Activated naive CD4-positive, alpha-beta T cell treated with anti-CD3 and anti-CD28 coated beads for 36 hours (primary cell): ENCODE measurements at regions of chr1 and their contacts with region 1.

Region 1: GRCh38 chr1:10283318-10283984 is 73.1 kb downstream of the KIF1B start:
- DNase-seq: peak; percentile 71
- H3K4me3 Mint-ChIP-seq: no peak overlapping the region
- H3K27ac Mint-ChIP-seq: peak overlapping the region; percentile 54
- H3K4me1 Mint-ChIP-seq: peaks cover 38% of the 10 kb centered on the region
- H3K27me3 Mint-ChIP-seq: no peaks in the 10 kb centered on the region

Region 2: GRCh38 chr1:9809100-9809510 is 474.3 kb before region 1 on chr1:
- CTCF ChIA-PET with region 1: no interaction called
- intact Hi-C with region 1: no loop called
- DNase-seq: no peak
- H3K4me3 Mint-ChIP-seq: no peak overlapping the region
- H3K27ac Mint-ChIP-seq: no peak overlapping the region
- H3K4me1 Mint-ChIP-seq: peaks cover 45% of the 10 kb centered on the region
- H3K27me3 Mint-ChIP-seq: no peaks in the 10 kb centered on the region

Region 3: GRCh38 chr1:10170239-10170574 is 113.2 kb before region 1 on chr1:
- CTCF ChIA-PET with region 1: interaction called, 3 read pairs
- intact Hi-C with region 1: loop called (anchors 1 kb)
- DNase-seq: peak; percentile 48
- H3K4me3 Mint-ChIP-seq: no peak overlapping the region
- H3K27ac Mint-ChIP-seq: peak overlapping the region; percentile 87
- H3K4me1 Mint-ChIP-seq: peaks cover 40% of the 10 kb centered on the region
- H3K27me3 Mint-ChIP-seq: no peaks in the 10 kb centered on the region

Region 4: GRCh38 chr1:10209905-10210810 is 73.3 kb before region 1 on chr1 and contains the start of gene KIF1B:
- CTCF ChIA-PET with region 1: interaction called, 13 read pairs
- intact Hi-C with region 1: loop called (anchors 1 kb)
- DNase-seq: peak; percentile 95
- H3K4me3 Mint-ChIP-seq: peak within 1 kb of the TSS; percentile 83
- H3K27ac Mint-ChIP-seq: peak within 1 kb of the TSS; percentile 69
- H3K4me1 Mint-ChIP-seq: peaks cover 29% of the 10 kb centered on the region
- H3K27me3 Mint-ChIP-seq: no peaks in the 10 kb centered on the region
- total RNA-seq, gene KIF1B: 6.1 to 6.2 TPM

Region 5: GRCh38 chr1:10232163-10232562 is 51.3 kb before region 1 on chr1:
- CTCF ChIA-PET with region 1: no interaction called
- intact Hi-C with region 1: loop called (anchors 5 kb)
- DNase-seq: no peak
- H3K4me3 Mint-ChIP-seq: no peak overlapping the region
- H3K27ac Mint-ChIP-seq: no peak overlapping the region
- H3K4me1 Mint-ChIP-seq: peaks cover 18% of the 10 kb centered on the region
- H3K27me3 Mint-ChIP-seq: no peaks in the 10 kb centered on the region

Region 6: GRCh38 chr1:10398734-10399623 is 115.5 kb after region 1 on chr1 and contains the start of gene PGD:
- CTCF ChIA-PET with region 1: no interaction called
- intact Hi-C with region 1: loop called (anchors 2 kb)
- DNase-seq: peak; percentile 98
- H3K4me3 Mint-ChIP-seq: peak within 1 kb of the TSS; percentile 83
- H3K27ac Mint-ChIP-seq: no peak within 1 kb of the TSS
- H3K4me1 Mint-ChIP-seq: peaks cover 25% of the 10 kb centered on the region
- H3K27me3 Mint-ChIP-seq: no peaks in the 10 kb centered on the region
- total RNA-seq, gene PGD: 94.8 to 101 TPM